ENCODE measurements at regions of chr14 and their contacts with region 1.

Region 1: DNA sequence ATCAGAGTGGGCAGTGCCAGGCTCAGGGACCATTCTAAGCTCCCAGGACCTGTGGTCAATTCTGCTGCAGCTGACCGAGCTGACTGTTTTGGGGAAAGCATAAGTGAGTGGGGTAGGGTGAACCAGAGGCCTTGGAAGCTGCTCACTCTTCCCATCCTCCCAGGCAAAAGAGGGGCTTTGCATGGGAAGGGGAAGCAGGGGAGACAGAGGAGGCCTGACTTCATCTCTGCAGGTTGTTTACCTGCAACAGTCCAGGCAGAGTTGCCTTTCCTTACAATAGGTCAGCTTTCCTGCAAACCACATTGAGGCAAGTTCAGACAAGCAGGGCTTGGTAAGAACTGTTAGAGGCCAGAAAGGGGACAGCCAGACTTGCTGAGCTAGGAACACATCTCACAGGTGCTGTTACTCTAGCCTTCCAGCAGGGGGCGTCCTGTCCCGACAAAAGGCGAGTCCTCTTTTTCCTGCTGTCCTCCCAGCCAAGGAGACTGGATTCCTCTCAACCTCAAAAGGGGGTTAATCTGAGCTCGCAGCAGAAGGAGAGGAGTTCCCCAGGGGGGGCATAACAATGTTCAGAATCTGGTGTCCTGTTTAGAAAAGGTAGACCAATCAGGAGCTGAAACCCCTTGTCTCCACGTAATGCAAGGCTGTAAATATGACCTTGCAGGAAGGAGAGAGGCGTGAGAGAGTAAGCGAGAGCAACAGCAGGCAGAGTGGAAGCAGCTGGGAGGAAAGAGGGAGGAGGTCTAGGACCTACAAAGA is 4.3 kb upstream of the DHRS2 start:
- DNase-seq: peak in 1 of 2 donors; percentile 89
- H3K4me3 ChIP-seq: no peak overlapping the region
- H3K27ac ChIP-seq: no peak overlapping the region
- H3K4me1 ChIP-seq: peaks cover 14% of the 10 kb centered on the region
- H3K27me3 ChIP-seq: no peaks in the 10 kb centered on the region
- CTCF ChIP-seq: peak; percentile 86 to 93 (median 87)
- POLR2A ChIP-seq: no peak

Region 2: DNA sequence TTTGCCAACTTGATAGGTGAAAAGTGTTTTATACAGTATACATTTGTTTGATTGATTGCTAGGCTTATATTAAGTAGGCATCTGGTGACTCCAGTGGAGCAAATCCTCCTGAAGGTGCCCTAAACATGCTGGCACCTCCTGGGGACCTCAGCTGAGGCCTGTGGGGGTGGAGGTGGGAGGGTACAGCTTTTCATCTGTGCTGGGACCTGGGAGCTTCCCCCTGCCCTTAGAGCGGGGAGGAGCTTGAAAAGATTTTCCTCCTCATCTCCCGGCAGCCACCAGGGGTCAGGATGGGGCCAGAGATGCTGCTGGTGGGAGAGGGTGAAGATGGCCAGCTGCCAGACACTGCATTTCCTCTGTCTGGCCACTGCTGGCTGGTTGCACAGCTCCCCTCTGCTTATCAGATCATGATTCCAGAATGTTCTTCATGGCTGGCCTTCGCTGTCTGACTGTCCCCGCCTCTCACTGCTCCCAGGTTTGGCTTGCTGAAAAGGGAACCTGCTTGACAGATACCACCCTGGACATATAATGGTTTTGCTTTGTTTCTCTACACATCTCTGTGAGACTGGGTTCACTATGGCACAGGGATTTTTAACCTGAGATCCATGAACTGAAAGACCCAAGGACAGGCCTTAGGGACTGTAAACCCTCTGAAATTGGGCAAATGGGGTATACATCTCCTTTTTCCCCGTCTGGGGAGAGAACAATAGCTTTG is 42.8 kb before region 1 on chr14:
- intact Hi-C with region 1: no loop called
- DNase-seq: no peak
- H3K4me3 ChIP-seq: no peak overlapping the region
- H3K27ac ChIP-seq: no peak overlapping the region
- H3K4me1 ChIP-seq: no peaks in the 10 kb centered on the region
- H3K27me3 ChIP-seq: no peaks in the 10 kb centered on the region
- CTCF ChIP-seq: peak; percentile 25 to 59 (median 31)
- POLR2A ChIP-seq: no peak

Region 3: GRCh38 chr14:23704890-23705289 is 73.0 kb after region 1 on chr14:
- intact Hi-C with region 1: no loop called
- DNase-seq: no peak
- H3K4me3 ChIP-seq: no peak overlapping the region
- H3K27ac ChIP-seq: no peak overlapping the region
- H3K4me1 ChIP-seq: no peaks in the 10 kb centered on the region
- H3K27me3 ChIP-seq: no peaks in the 10 kb centered on the region
- CTCF ChIP-seq: no peak
- POLR2A ChIP-seq: no peak

Region 4: DNA sequence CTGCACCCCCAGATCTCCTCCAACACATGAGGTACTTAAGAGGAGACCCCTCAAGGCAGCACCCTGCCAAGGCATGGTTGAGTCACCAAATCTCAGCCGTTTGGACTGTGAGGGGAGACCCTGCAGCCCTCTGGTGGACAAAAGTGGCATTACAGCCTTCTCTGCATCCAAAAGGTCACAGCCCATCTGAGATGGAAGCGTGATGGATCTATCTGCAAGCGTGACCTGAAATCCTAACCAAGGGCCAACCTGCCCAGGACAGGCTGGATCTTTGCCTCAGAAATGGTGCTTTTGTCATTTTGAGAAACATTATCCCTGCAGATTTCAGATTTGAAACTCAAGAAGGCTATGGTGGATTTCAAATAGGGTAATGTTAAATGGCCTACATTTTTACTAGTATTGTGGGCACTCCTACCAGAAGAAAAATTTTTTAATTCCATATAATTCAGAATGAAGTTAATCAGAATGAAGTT is 298.0 kb after region 1 on chr14:
- intact Hi-C with region 1: loop called (anchors 10 kb)
- DNase-seq: no peak
- H3K4me3 ChIP-seq: no peak overlapping the region
- H3K27ac ChIP-seq: no peak overlapping the region
- H3K4me1 ChIP-seq: no peaks in the 10 kb centered on the region
- H3K27me3 ChIP-seq: no peaks in the 10 kb centered on the region
- CTCF ChIP-seq: peak; percentile 30 to 66 (median 65)
- POLR2A ChIP-seq: no peak